ENCODE measurements at regions of chr17 and their contacts with region 1.

Region 1: GRCh38 chr17:29640413-29640812 is 17.7 kb upstream of the CORO6 start:
- DNase-seq: peak; percentile 90
- H3K4me3 ChIP-seq: no peak overlapping the region
- H3K27ac ChIP-seq: peak overlapping the region; percentile 79
- H3K4me1 ChIP-seq: peaks cover 58% of the 10 kb centered on the region
- H3K27me3 ChIP-seq: no peaks in the 10 kb centered on the region
- CTCF ChIP-seq: no peak
- POLR2A ChIP-seq: no peak

Region 2: GRCh38 chr17:29653995-29654714 is 13.7 kb after region 1 on chr17:
- CTCF ChIA-PET with region 1: interaction called, 12 read pairs
- POLR2A ChIA-PET with region 1: no interaction called
- dilution Hi-C with region 1: no loop called
- intact Hi-C with region 1: no loop called
- DNase-seq: no peak
- H3K4me3 ChIP-seq: no peak overlapping the region
- H3K27ac ChIP-seq: no peak overlapping the region
- H3K4me1 ChIP-seq: no peaks in the 10 kb centered on the region
- H3K27me3 ChIP-seq: no peaks in the 10 kb centered on the region
- CTCF ChIP-seq: no peak
- POLR2A ChIP-seq: no peak

Region 3: DNA sequence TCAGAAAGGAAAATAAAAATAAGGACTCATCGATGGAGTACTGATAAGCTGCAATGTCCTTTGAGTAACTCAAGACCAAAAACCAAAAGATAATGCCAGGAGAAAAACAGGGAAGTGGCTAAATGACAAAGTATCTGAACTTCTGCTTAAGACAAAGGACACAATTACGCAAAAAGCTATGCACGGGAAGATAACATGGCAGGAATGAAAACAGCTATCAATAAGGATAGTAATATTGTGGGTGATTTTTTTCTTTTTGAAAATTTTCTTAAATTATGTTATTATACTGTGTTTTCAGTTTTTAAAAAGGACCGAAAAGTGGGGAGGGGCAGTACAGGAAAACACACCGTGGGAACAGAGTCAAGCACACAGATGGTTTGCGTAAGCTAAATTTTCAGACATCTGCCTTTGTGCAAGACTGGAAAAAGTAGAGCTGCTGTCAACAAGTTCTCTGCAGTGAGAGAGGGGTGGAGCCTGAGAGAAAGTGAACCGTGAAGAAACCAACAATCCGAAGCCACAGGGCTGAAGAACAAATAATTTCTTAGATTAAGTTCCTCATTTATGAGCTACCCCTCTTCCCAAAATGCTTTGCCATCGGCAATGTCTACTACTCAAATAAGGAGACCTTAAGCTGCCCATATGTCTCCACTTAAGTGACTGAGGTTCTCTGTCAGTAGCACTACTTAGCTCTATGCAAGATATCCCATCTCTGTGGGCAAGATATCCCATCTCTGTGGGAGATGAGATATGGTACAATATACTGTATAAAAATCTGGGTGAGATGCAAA is 82.2 kb after region 1 on chr17:
- CTCF ChIA-PET with region 1: interaction called, 12 read pairs
- POLR2A ChIA-PET with region 1: interaction called, 4 read pairs
- dilution Hi-C with region 1: no loop called
- intact Hi-C with region 1: loop called (anchors 1 kb)
- DNase-seq: peak; percentile 84
- H3K4me3 ChIP-seq: no peak overlapping the region
- H3K27ac ChIP-seq: peak overlapping the region; percentile 32
- H3K4me1 ChIP-seq: peaks cover 35% of the 10 kb centered on the region
- H3K27me3 ChIP-seq: no peaks in the 10 kb centered on the region
- CTCF ChIP-seq: no peak
- POLR2A ChIP-seq: no peak

Region 4: GRCh38 chr17:29766796-29767327 is 126.4 kb after region 1 on chr17:
- CTCF ChIA-PET with region 1: interaction called, 27 read pairs
- POLR2A ChIA-PET with region 1: interaction called, 4 read pairs
- dilution Hi-C with region 1: no loop called
- intact Hi-C with region 1: no loop called
- DNase-seq: no peak
- H3K4me3 ChIP-seq: no peak overlapping the region
- H3K27ac ChIP-seq: no peak overlapping the region
- H3K4me1 ChIP-seq: no peaks in the 10 kb centered on the region
- H3K27me3 ChIP-seq: no peaks in the 10 kb centered on the region
- CTCF ChIP-seq: no peak
- POLR2A ChIP-seq: no peak

Region 5: DNA sequence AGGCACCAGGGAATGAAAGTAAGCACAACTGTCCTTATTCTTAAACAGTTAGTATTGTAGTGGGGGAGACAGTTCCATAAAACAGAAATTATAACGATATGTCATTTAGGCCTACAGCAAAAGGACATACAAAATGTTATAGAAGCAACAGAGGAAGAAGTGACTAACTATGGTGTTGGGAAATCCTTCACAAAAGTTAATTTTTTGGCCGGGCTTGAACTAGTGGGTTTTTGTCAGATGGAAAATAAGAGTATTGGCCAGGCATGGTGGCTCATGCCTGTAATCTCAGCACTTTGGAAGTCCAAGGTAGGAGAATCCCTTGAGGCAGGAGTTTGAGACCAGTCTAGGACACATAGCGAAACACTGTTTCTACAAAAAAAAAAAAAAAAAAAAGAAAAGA is 161.8 kb after region 1 on chr17:
- CTCF ChIA-PET with region 1: interaction called, 40 read pairs
- POLR2A ChIA-PET with region 1: no interaction called
- dilution Hi-C with region 1: no loop called
- intact Hi-C with region 1: no loop called
- DNase-seq: no peak
- H3K4me3 ChIP-seq: no peak overlapping the region
- H3K27ac ChIP-seq: no peak overlapping the region
- H3K4me1 ChIP-seq: no peaks in the 10 kb centered on the region
- H3K27me3 ChIP-seq: no peaks in the 10 kb centered on the region
- CTCF ChIP-seq: no peak
- POLR2A ChIP-seq: no peak

Region 6: GRCh38 chr17:29931231-29931932 is 291.0 kb after region 1 on chr17:
- CTCF ChIA-PET with region 1: interaction called, 98 read pairs
- POLR2A ChIA-PET with region 1: interaction called, 11 read pairs
- dilution Hi-C with region 1: no loop called
- intact Hi-C with region 1: loop called (anchors 1 kb)
- DNase-seq: peak; percentile 86
- H3K4me3 ChIP-seq: peak overlapping the region in 1 of 3 experiments; percentile 66
- H3K27ac ChIP-seq: no peak overlapping the region
- H3K4me1 ChIP-seq: peaks cover 34% of the 10 kb centered on the region
- H3K27me3 ChIP-seq: no peaks in the 10 kb centered on the region
- CTCF ChIP-seq: peak; percentile 81 to 87
- POLR2A ChIP-seq: no peak

Measured in endothelial cell of umbilical vein (primary cell).